ENCODE measurements at regions of chr11 and their contacts with region 1.

Region 1: DNA sequence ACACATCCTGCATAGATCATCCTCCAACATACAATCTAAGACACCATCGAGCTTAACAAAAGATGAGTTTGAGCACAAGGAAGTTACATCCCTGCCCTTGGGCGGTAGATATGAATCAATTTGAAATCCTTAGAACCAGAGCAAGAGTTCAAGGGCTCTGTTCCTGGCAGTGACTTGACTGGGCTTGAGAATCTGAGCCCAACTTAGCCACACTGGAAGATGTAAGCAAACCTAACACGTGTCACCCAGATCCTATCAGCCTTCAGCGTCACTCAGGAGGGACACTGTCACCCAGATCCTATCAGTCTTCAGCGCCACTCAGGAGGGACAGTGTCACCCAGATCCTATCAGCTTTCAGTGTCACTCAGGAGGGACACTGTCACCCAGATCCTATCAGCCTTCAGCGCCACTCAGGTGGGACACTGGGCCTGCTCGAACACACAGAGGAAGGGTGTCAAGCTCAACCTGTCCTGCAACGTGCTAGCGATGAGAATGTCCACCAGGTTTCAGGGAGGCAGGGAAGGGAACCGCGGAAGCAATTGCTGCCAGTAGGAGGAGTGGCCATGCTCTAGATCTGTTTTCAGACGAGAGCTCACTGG is 32.8 kb upstream of the CTSD start:
- DNase-seq: no peak
- ATAC-seq: peak; percentile 77
- H3K4me3 Mint-ChIP-seq: no peak overlapping the region
- H3K27ac Mint-ChIP-seq: no peak overlapping the region
- H3K4me1 Mint-ChIP-seq: no peaks in the 10 kb centered on the region
- H3K27me3 Mint-ChIP-seq: peaks cover 36% of the 10 kb centered on the region
- CTCF ChIP-seq: no peak

Region 2: DNA sequence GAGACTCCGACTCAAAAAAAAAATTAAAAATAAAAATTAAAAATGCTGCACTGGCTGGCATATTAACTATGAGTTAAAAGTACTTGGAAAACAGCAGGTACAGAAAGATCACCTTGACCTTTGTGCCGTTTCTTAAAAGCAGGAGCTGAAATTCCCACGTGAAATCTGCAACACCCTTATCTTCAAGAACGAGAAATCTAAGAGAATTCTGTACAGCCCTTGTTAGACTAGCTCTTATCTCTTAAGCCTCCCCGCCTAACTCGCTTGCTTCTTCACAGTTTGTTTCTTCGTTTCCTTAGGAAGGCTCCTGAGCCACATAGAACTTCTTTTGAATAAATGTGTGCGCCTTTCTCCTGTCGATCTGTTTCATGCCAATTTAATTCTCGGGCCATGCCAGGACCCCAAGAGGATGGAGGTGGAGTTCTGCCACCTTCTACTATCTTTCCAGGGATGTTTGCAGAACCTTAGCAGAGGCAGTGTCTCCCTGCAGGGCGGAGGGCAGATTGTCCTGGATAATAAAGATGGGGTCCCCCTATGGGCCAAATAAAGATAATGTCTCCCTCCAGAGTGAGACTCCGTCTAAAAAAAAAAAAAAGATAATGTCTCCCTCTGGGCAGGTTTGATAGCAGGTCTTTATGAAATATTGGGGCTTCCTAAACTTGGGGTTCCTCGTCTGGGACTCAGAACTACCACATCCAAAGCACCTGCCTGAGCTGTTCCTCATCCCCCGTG is 10.9 kb after region 1 on chr11:
- CTCF ChIA-PET with region 1: interaction called, 15 read pairs
- POLR2A ChIA-PET with region 1: interaction called, 4 read pairs
- DNase-seq: no peak
- ATAC-seq: peak; percentile 80
- H3K4me3 Mint-ChIP-seq: no peak overlapping the region
- H3K27ac Mint-ChIP-seq: no peak overlapping the region
- H3K4me1 Mint-ChIP-seq: peaks cover 8% of the 10 kb centered on the region
- H3K27me3 Mint-ChIP-seq: peaks cover 24% of the 10 kb centered on the region
- CTCF ChIP-seq: no peak; the same call in 1 of the 2 replicates